SK-N-SH (cell line): ENCODE measurements at regions of chr1 and their contacts with region 1.

Region 1: GRCh38 chr1:156728597-156729462 is at the start of gene ISG20L2:
- DNase-seq: peak; percentile 92
- H3K4me3 ChIP-seq: peak within 1 kb of the TSS; percentile 76 to 87
- H3K27ac ChIP-seq: peak within 1 kb of the TSS; percentile 83 to 88
- H3K4me1 ChIP-seq: peaks cover 28 to 56% of the 10 kb centered on the region in 2 experiments
- H3K27me3 ChIP-seq: no peaks in the 10 kb centered on the region
- CTCF ChIP-seq: no peak
- EP300 ChIP-seq: no peak
- RAD21 ChIP-seq: no peak
- polyA plus RNA-seq, gene ISG20L2: 31.6 and 44.3 TPM in 2 replicates

Region 2: DNA sequence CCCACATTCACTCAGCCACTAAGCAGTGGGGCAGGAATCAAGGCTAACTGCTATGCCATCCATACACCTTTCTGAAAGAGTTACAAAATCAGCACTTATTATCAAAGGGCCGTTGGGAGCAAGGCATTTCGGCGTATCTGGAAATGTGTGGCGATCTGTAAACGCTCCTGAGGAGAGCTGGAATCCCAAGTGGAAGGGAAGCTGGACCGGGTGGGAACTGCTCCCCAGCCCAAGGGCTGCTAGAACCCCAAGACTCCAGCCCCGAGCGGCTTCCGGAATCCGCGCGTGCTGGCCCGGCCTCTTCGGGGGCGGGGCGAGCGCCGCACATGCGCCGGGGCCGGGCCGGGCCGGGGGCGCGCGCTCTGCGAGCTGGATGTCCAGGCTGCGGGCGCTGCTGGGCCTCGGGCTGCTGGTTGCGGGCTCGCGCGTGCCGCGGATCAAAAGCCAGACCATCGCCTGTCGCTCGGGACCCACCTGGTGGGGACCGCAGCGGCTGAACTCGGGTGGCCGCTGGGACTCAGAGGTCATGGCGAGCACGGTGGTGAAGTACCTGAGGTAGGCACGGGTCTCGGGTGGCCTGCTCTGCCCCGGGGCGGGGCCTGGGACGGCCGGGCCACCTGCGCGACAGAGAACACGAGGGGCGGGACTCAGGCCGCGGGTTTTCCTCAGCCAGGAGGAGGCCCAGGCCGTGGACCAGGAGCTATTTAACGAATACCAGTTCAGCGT is 137.2 kb before region 1 on chr1 and contains the start of gene NAXE:
- CTCF ChIA-PET with region 1: no interaction called
- POLR2A ChIA-PET with region 1: no interaction called
- DNase-seq: peak; percentile 95
- H3K4me3 ChIP-seq: peak within 1 kb of the TSS; percentile 83 to 86
- H3K27ac ChIP-seq: peak within 1 kb of the TSS; percentile 64 to 93
- H3K4me1 ChIP-seq: peaks cover 0 to 16% of the 10 kb centered on the region in 2 experiments; a peak in 2 of 4 replicates
- H3K27me3 ChIP-seq: no peaks in the 10 kb centered on the region
- CTCF ChIP-seq: no peak
- EP300 ChIP-seq: no peak
- RAD21 ChIP-seq: no peak
- polyA plus RNA-seq, gene NAXE: 68.5 and 98.4 TPM in 2 replicates

Region 3: DNA sequence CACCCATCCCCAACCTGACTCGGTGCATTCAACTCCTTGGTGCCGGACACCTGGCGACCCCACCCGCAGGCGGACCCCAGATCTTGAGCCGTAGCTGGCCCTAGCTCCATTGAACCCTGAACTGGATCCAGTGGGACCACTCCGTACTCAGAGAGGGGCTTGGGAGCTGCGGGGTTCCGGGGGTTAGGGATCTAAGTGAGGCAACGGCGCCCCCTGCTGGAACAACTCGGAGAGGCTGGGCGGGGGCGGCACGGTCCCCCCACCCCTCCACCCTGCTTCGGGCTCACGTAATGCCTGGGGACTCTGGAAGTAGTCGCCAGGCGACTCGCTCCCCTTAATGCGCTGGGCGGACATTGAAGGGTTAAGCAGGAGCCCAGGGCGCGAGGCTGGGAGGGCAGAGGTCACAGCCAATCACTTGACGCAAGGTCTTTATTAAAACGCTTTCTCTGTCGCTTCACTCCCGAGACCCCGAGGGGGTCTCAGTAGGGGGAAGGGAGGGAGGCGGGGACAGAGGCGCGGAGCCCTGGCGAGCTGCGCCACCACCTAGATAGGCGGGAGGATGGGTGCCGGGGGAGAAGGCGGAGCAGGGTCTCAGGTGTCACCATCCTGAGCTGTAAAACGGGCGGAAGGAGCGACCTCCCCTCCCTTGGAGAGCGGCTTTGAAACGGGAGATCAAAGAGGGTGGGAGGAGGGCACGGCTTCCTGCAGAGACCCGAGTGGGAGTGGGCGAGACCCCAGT is 22.7 kb before region 1 on chr1:
- CTCF ChIA-PET with region 1: interaction called, 2,702 read pairs
- POLR2A ChIA-PET with region 1: interaction called, 11 read pairs
- DNase-seq: peak; percentile 90
- H3K4me3 ChIP-seq: peak overlapping the region; percentile 54 to 58
- H3K27ac ChIP-seq: peak overlapping the region in 1 of 2 experiments; percentile 98; a peak in 2 of 4 replicates
- H3K4me1 ChIP-seq: peaks cover 70 to 90% of the 10 kb centered on the region in 2 experiments
- H3K27me3 ChIP-seq: no peaks in the 10 kb centered on the region
- CTCF ChIP-seq: peak; percentile 96
- EP300 ChIP-seq: no peak
- RAD21 ChIP-seq: peak; percentile 66

Region 4: GRCh38 chr1:156751758-156752757 is 23.2 kb after region 1 on chr1:
- CTCF ChIA-PET with region 1: interaction called, 30 read pairs
- POLR2A ChIA-PET with region 1: interaction called, 14 read pairs
- DNase-seq: peak; percentile 98
- H3K4me3 ChIP-seq: peak overlapping the region; percentile 78 to 98
- H3K27ac ChIP-seq: peak overlapping the region; percentile 100
- H3K4me1 ChIP-seq: peaks cover 27 to 39% of the 10 kb centered on the region in 2 experiments
- H3K27me3 ChIP-seq: no peaks in the 10 kb centered on the region
- CTCF ChIP-seq: no peak
- EP300 ChIP-seq: peak in 1 of 2 experiments; percentile 39; a peak in 1 of 4 replicates
- RAD21 ChIP-seq: no peak

Region 5: GRCh38 chr1:156797212-156797871 is 68.5 kb after region 1 on chr1:
- CTCF ChIA-PET with region 1: interaction called, 77 read pairs
- POLR2A ChIA-PET with region 1: interaction called, 4 read pairs
- DNase-seq: peak; percentile 68
- H3K4me3 ChIP-seq: no peak overlapping the region; a peak in 1 of 4 replicates
- H3K27ac ChIP-seq: peak overlapping the region in 1 of 2 experiments; percentile 85; a peak in 2 of 4 replicates
- H3K4me1 ChIP-seq: peaks cover 20 to 59% of the 10 kb centered on the region in 2 experiments
- H3K27me3 ChIP-seq: no peaks in the 10 kb centered on the region
- CTCF ChIP-seq: peak; percentile 94
- EP300 ChIP-seq: peak in 1 of 2 experiments; percentile 83; a peak in 2 of 4 replicates
- RAD21 ChIP-seq: peak; percentile 90

Region 6: GRCh38 chr1:156892190-156893047 is 163.6 kb after region 1 on chr1:
- CTCF ChIA-PET with region 1: interaction called, 156 read pairs
- POLR2A ChIA-PET with region 1: no interaction called
- DNase-seq: peak; percentile 94
- H3K4me3 ChIP-seq: no peak overlapping the region; a peak in 1 of 4 replicates
- H3K27ac ChIP-seq: no peak overlapping the region
- H3K4me1 ChIP-seq: peaks cover 23 to 38% of the 10 kb centered on the region in 2 experiments; a peak in 3 of 4 replicates
- H3K27me3 ChIP-seq: no peaks in the 10 kb centered on the region
- CTCF ChIP-seq: peak; percentile 92
- EP300 ChIP-seq: no peak
- RAD21 ChIP-seq: peak; percentile 75

Region 7: DNA sequence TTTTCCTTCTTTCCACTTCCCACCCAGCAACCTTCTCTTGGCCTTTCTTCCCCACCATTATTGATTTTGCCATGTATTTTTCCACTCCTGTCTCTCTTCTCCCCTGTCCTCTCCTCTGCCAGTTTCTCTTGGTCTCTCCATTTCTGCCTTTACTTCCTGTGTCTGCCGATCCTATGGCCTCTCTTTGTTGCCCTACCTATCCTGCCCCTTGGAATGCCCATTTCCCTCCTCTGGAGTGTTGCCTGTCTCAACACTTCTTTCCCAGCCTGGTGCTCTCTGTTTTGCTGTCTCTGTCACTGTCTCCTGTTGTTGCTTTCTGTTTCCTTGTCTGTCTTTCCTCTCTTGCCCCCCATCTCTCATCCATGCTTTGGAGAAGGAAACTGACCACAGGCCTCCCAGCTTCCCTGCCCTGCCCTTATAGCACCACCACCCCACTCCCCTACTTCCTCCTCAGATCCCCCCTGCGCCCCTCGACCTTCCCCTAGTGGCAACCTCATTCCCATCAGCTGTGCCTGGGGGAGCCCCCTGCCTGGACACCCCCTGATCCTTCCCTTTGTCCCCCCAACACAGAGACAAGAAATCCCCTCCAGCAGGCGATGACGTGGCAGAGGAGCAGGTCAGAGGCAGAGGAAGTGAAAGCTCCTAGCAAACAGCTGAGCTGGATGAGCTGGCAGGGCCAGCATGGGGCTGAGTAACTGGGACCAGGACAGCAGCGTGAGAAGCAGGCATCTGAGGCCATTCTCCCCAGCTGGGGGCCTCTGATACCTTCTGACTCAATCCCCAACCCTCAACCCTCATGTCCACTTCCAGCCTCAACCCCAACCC is 377.4 kb after region 1 on chr1:
- CTCF ChIA-PET with region 1: no interaction called
- POLR2A ChIA-PET with region 1: no interaction called
- DNase-seq: no peak
- H3K4me3 ChIP-seq: no peak overlapping the region
- H3K27ac ChIP-seq: peak overlapping the region in 1 of 2 experiments; percentile 47; a peak in 2 of 4 replicates
- H3K4me1 ChIP-seq: peaks cover 0 to 17% of the 10 kb centered on the region in 2 experiments; a peak in 1 of 4 replicates
- H3K27me3 ChIP-seq: no peaks in the 10 kb centered on the region
- CTCF ChIP-seq: no peak
- EP300 ChIP-seq: no peak
- RAD21 ChIP-seq: no peak